GM12878 (cell line): ENCODE measurements at regions of chr9 and their contacts with region 1.

Region 1: DNA sequence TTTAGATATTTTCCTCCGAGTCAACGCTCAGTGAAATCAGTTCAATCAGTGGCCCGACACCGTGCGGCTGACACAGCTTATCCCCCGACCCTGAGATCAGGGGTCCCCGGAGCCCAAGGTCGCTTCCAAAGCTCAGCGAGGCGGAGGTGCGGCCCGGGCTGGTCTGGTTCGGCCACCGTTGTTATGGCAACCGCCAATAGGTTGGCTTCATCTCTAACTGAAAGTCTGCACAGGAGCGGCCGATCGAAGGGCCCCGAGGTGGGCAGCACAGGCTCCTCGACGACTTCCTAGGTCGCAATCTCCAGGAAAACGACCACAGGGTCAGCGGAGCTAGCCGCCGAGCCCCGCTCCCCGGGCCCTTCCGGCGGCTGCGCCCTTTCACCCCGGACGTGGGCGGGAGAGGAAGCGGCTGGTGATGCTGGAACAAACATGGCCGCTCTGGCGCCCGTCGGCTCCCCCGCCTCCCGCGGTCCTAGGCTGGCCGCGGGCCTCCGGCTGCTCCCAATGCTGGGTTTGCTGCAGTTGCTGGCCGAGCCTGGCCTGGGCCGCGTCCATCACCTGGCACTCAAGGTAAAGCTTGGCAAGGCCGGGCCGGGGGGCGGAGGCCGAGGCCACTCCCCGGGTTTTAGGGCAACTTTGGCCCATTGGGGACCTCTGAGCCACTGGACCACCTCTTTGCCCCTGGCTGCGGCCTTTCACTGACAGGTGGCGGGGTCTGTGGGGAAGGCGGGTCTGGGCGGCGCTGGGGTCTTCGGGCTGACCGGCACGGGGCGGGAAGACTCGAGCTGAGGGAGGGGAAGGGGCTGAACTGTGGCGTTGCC is at the start of gene GPR107:
- DNase-seq: no peak
- ATAC-seq: peak; percentile 94
- H3K4me3 ChIP-seq: peak within 1 kb of the TSS; percentile 83
- H3K27ac ChIP-seq: peak within 1 kb of the TSS; percentile 95
- H3K4me1 ChIP-seq: peaks cover 7% of the 10 kb centered on the region
- H3K27me3 ChIP-seq: no peaks in the 10 kb centered on the region
- CTCF ChIP-seq: no peak
- EP300 ChIP-seq: 0 out of 4 replicates have a peak, but pooled peaks of 1 of the 2 experiments have one; percentile 7
- POLR2A ChIP-seq: peak; percentile 85
- RAD21 ChIP-seq: no peak
- polyA plus RNA-seq, gene GPR107: 2.7 to 2.9 TPM

Region 2: GRCh38 chr9:130002320-130003046 is 51.2 kb before region 1 on chr9:
- CTCF ChIA-PET with region 1: no interaction called
- POLR2A ChIA-PET with region 1: no interaction called
- RAD21 ChIA-PET with region 1: no interaction called
- SMC1A ChIA-PET with region 1: no interaction called
- in situ Hi-C with region 1: no loop called
- intact Hi-C with region 1: no loop called
- DNase-seq: no peak
- ATAC-seq: no peak
- H3K4me3 ChIP-seq: no peak overlapping the region
- H3K27ac ChIP-seq: peak overlapping the region; percentile 65
- H3K4me1 ChIP-seq: peaks cover 59% of the 10 kb centered on the region
- H3K27me3 ChIP-seq: no peaks in the 10 kb centered on the region
- CTCF ChIP-seq: no peak
- EP300 ChIP-seq: no peak
- POLR2A ChIP-seq: no peak
- RAD21 ChIP-seq: no peak

Region 3: DNA sequence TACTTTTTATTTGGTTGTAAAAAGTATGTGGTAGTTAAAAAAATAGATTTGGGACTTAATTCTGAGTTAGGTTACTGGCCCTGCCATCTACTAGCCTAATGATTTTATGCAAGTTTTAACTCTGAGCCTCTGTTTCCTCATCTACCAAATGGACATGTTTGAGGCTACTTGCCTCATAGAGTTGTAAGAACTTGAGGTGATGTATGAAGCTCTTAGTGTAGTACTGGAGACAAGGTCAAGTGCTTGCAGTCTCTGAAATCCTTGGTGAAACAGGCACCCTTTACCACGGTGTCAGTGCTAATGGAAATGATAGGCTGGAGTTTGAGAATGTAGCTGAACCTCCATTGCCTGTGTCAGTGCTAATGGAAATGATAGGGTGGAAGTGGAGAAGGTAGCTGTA is 15.3 kb after region 1 on chr9:
- CTCF ChIA-PET with region 1: interaction called, 10 read pairs
- POLR2A ChIA-PET with region 1: interaction called, 9 read pairs
- RAD21 ChIA-PET with region 1: no interaction called
- SMC1A ChIA-PET with region 1: interaction called, 4 read pairs
- in situ Hi-C with region 1: no loop called
- intact Hi-C with region 1: no loop called
- DNase-seq: no peak
- ATAC-seq: no peak
- H3K4me3 ChIP-seq: no peak overlapping the region
- H3K27ac ChIP-seq: peak overlapping the region; percentile 20; the same call in 1 of the 2 replicates
- H3K4me1 ChIP-seq: peaks cover 18% of the 10 kb centered on the region
- H3K27me3 ChIP-seq: no peaks in the 10 kb centered on the region
- CTCF ChIP-seq: no peak
- EP300 ChIP-seq: no peak
- POLR2A ChIP-seq: no peak
- RAD21 ChIP-seq: no peak